ENCODE measurements at regions of chr2 and their contacts with region 1.

Region 1: GRCh38 chr2:170873035-170873692 is 55.9 kb upstream of the GORASP2 start:
- DNase-seq: peak; percentile 85
- H3K4me3 Mint-ChIP-seq: peak overlapping the region; percentile 56
- H3K27ac Mint-ChIP-seq: peak overlapping the region; percentile 30
- H3K4me1 Mint-ChIP-seq: peaks cover 13% of the 10 kb centered on the region
- H3K27me3 Mint-ChIP-seq: no peaks in the 10 kb centered on the region
- CTCF ChIP-seq: peak; percentile 89

Region 2: DNA sequence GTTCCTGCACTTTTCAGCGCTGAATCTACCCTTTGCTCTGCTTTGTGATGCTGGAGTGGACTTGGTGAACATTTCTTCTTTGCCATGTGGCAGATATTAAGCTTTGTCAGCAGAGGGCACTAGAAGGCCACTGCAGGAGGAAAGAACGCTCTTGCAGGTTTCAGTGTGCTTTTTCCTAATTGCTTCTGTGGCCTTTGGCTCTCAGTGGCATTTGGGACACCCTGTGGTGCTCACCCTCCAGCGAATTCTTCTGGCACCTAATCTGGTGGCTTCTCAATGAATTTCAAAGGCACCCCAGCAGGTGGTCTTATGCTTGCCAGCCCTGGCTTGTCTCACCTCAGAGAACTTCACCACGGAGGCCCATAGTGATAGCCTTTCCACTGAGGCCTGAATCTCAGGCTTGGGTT is 548.5 kb before region 1 on chr2:
- CTCF ChIA-PET with region 1: no interaction called
- intact Hi-C with region 1: loop called (anchors 5 kb)
- DNase-seq: peak; percentile 40
- H3K4me3 Mint-ChIP-seq: no peak overlapping the region
- H3K27ac Mint-ChIP-seq: no peak overlapping the region
- H3K4me1 Mint-ChIP-seq: peaks cover 1% of the 10 kb centered on the region
- H3K27me3 Mint-ChIP-seq: no peaks in the 10 kb centered on the region
- CTCF ChIP-seq: no peak

Region 3: GRCh38 chr2:170966648-170967436 is 93.7 kb after region 1 on chr2:
- CTCF ChIA-PET with region 1: no interaction called
- intact Hi-C with region 1: no loop called
- DNase-seq: peak; percentile 21
- H3K4me3 Mint-ChIP-seq: no peak overlapping the region
- H3K27ac Mint-ChIP-seq: no peak overlapping the region
- H3K4me1 Mint-ChIP-seq: peaks cover 9% of the 10 kb centered on the region
- H3K27me3 Mint-ChIP-seq: no peaks in the 10 kb centered on the region
- CTCF ChIP-seq: no peak

Region 4: GRCh38 chr2:171325886-171326585 is 452.9 kb after region 1 on chr2:
- CTCF ChIA-PET with region 1: no interaction called
- intact Hi-C with region 1: no loop called
- DNase-seq: no peak
- H3K4me3 Mint-ChIP-seq: no peak overlapping the region
- H3K27ac Mint-ChIP-seq: no peak overlapping the region
- H3K4me1 Mint-ChIP-seq: no peaks in the 10 kb centered on the region
- H3K27me3 Mint-ChIP-seq: no peaks in the 10 kb centered on the region
- CTCF ChIP-seq: no peak

Measured in Calu3 (cell line).